ENCODE measurements at regions of chr4 and their contacts with region 1.

Region 1: DNA sequence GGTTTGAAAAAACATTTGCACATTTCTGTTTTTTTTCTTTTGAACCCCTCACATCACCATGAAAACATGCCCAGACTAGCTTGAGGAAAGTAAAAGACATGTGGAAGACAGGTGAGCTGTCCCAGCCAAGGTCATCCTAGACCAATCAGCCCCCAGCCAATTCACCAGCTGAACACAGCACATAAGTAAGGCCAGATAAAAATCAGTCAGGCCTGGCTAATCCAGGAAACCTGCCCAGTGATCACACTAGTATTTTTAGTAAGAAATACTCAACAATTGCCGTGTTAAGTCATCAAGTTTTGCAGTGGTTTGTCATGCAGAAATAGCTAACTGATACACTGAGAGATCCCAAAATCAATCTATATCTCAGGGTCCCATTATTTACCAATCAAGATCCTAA is 4.4 kb upstream of the SMR3A start:
- DNase-seq: no peak
- ATAC-seq: peak; percentile 48
- H3K4me3 ChIP-seq: no peak overlapping the region
- H3K27ac ChIP-seq: no peak overlapping the region
- H3K4me1 ChIP-seq: no peaks in the 10 kb centered on the region
- H3K27me3 ChIP-seq: no peaks in the 10 kb centered on the region
- CTCF ChIP-seq: no peak
- EP300 ChIP-seq: no peak
- POLR2A ChIP-seq: no peak
- RAD21 ChIP-seq: no peak

Region 2: DNA sequence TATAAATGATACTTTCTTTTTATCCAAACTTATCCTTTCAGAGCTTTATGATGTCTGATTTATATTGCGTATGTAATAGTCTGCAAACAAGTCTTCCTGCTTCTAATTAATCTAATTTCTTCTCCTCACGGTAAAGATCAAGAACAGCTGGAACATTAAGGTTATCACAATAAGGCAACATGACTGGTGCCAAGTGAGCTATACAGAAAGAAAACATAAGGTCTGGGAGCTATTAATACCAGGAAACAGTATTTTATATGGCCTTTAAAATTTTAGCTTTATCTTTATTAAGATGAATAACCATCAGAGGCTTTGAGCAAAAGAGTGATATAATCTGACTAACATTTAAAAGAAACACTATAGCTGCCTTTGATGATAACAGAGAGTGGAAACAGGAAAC is 50.1 kb before region 1 on chr4:
- CTCF ChIA-PET with region 1: no interaction called
- POLR2A ChIA-PET with region 1: no interaction called
- RAD21 ChIA-PET with region 1: no interaction called
- SMC1A ChIA-PET with region 1: no interaction called
- in situ Hi-C with region 1: loop called (anchors 5 kb)
- intact Hi-C with region 1: no loop called
- DNase-seq: no peak
- ATAC-seq: no peak
- H3K4me3 ChIP-seq: no peak overlapping the region
- H3K27ac ChIP-seq: no peak overlapping the region
- H3K4me1 ChIP-seq: no peaks in the 10 kb centered on the region
- H3K27me3 ChIP-seq: no peaks in the 10 kb centered on the region
- CTCF ChIP-seq: no peak
- EP300 ChIP-seq: no peak
- POLR2A ChIP-seq: no peak
- RAD21 ChIP-seq: no peak

Region 3: GRCh38 chr4:70392057-70392776 is 36.0 kb after region 1 on chr4:
- CTCF ChIA-PET with region 1: no interaction called
- POLR2A ChIA-PET with region 1: no interaction called
- RAD21 ChIA-PET with region 1: no interaction called
- SMC1A ChIA-PET with region 1: interaction called, 3 read pairs
- in situ Hi-C with region 1: no loop called
- intact Hi-C with region 1: loop called (anchors 1 kb)
- DNase-seq: no peak
- ATAC-seq: peak; percentile 69
- H3K4me3 ChIP-seq: no peak overlapping the region
- H3K27ac ChIP-seq: no peak overlapping the region
- H3K4me1 ChIP-seq: peaks cover 3% of the 10 kb centered on the region
- H3K27me3 ChIP-seq: no peaks in the 10 kb centered on the region
- CTCF ChIP-seq: no peak
- EP300 ChIP-seq: peak; percentile 39 to 64; a peak in 2 of 4 replicates
- POLR2A ChIP-seq: no peak
- RAD21 ChIP-seq: no peak

Measured in GM12878 (cell line).